ENCODE measurements at regions of chr16 and their contacts with region 1.

Region 1: DNA sequence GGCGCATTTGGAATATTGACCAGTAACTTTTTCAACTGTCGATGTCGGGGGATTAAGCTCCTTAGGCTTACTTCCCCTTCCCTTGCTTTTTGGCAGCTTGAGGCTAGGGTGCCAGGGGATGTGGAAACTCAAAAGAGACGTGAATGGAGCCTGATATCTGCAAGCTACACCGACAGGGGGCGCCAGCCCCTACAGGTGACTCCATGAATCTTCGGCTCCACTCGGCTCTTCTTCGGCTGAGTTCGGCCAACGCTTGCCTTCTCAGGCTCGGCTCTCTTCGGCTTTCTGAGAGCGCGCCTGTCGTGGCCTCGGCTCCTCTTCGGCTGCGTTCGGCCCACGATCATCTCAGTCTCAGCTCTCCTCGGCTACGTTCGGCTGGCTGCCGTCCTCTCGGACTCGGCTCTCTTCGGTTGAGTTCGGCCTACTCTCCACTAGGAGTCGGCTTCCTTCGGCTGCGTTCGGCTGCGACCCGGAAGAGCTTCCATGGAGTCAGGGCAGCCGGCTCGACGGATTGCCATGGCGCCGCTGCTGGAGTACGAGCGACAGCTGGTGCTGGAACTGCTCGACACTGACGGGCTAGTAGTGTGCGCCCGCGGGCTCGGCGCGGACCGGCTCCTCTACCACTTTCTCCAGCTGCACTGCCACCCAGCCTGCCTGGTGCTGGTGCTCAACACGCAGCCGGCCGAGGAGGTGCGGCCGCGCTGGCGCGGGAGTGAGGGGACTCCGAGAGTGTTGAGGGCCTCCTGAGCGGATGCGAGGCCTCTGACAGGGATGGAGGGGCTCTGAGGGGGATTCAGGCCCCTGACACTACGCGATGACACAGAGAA is at the start of gene ERCC4:
- DNase-seq: peak; percentile 98 to 99 (median 98)
- H3K4me3 ChIP-seq: peak within 1 kb of the TSS; percentile 63 to 99 (median 92)
- H3K27ac ChIP-seq: peak within 1 kb of the TSS in 56 of 59 donors; percentile 44 to 97 (median 85)
- H3K27me3 ChIP-seq: no peaks in the 10 kb centered on the region
- CTCF ChIP-seq: peak; percentile 75 to 97 (median 87)
- total RNA-seq, gene ERCC4: 9.7 to 26.2 (median 16.9) TPM

Region 2: GRCh38 chr16:14070877-14071575 is 151.1 kb after region 1 on chr16 and contains the start of gene MRTFB:
- intact Hi-C with region 1: loop called in 1 of 2 experiments (anchors 10 kb)
- DNase-seq: peak in 8 of 10 donors; percentile 46 to 84 (median 58)
- H3K4me3 ChIP-seq: peak within 1 kb of the TSS; percentile 61 to 96 (median 84)
- H3K27ac ChIP-seq: peak within 1 kb of the TSS in 58 of 59 donors; percentile 35 to 93 (median 83)
- H3K27me3 ChIP-seq: no peaks in the 10 kb centered on the region
- CTCF ChIP-seq: no peak
- total RNA-seq, gene MRTFB: 76.4 to 314 (median 223) TPM

Region 3: DNA sequence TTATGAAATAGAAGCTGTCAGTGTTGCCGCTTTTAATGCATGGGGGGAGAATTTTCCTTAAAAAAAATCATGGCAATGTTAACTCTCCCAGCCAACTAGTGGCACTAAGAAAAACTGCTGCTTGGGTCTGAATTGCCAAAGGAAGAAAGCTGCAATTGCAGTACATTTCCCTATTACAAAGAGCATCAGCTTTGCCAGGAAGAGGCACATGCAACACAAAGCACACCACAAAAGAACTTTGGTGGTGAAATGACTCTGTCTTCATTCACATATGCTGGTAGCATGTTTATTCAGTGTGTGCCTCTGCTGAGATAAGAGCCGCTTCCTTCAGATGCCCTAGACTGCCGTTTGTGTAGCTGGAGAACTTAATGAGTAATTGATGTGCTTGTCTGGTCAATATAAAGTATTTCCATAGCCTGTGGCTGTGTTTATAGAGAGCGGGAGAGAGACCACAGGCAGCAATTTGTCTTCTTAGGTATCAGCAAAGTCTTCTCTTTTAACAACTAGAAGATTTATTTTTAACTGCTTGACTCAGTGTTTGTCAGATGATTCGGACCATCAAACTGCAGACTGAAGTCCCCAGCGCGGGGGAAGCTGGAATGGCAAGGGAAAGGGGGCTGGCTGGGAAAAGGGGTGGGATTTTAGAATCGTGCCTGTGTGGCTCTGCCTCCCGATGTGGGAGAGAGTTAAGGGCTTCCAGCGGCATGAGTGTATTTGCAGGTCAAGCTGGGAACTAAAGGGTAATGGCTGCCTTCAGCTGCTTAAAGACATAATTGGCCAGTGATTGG is 266.3 kb after region 1 on chr16:
- intact Hi-C with region 1: loop called in 1 of 2 experiments (anchors 10 kb)
- DNase-seq: peak in 8 of 10 donors; percentile 38 to 78 (median 68)
- H3K4me3 ChIP-seq: peak overlapping the region; percentile 31 to 77 (median 61)
- H3K27ac ChIP-seq: peak overlapping the region in 58 of 59 donors; percentile 11 to 94 (median 84)
- H3K27me3 ChIP-seq: no peaks in the 10 kb centered on the region
- CTCF ChIP-seq: peak in 51 of 56 donors; percentile 16 to 64 (median 44)

Region 4: GRCh38 chr16:14249291-14250032 is 329.6 kb after region 1 on chr16:
- intact Hi-C with region 1: loop called (anchors 5 to 10 kb)
- DNase-seq: peak in 3 of 10 donors; percentile 17 to 61 (median 59)
- H3K4me3 ChIP-seq: no peak overlapping the region
- H3K27ac ChIP-seq: peak overlapping the region in 2 of 59 donors; percentile 22 to 34
- H3K27me3 ChIP-seq: no peaks in the 10 kb centered on the region
- CTCF ChIP-seq: peak; percentile 65 to 93 (median 84)

Region 5: GRCh38 chr16:14285513-14286385 is 365.9 kb after region 1 on chr16:
- intact Hi-C with region 1: loop called (anchors 2 to 5 kb)
- DNase-seq: peak; percentile 87 to 94 (median 93)
- H3K4me3 ChIP-seq: peak overlapping the region; percentile 58 to 95 (median 83)
- H3K27ac ChIP-seq: peak overlapping the region; percentile 73 to 94 (median 88)
- H3K27me3 ChIP-seq: no peaks in the 10 kb centered on the region
- CTCF ChIP-seq: peak in 18 of 56 donors; percentile 1 to 40 (median 16)

Region 6: DNA sequence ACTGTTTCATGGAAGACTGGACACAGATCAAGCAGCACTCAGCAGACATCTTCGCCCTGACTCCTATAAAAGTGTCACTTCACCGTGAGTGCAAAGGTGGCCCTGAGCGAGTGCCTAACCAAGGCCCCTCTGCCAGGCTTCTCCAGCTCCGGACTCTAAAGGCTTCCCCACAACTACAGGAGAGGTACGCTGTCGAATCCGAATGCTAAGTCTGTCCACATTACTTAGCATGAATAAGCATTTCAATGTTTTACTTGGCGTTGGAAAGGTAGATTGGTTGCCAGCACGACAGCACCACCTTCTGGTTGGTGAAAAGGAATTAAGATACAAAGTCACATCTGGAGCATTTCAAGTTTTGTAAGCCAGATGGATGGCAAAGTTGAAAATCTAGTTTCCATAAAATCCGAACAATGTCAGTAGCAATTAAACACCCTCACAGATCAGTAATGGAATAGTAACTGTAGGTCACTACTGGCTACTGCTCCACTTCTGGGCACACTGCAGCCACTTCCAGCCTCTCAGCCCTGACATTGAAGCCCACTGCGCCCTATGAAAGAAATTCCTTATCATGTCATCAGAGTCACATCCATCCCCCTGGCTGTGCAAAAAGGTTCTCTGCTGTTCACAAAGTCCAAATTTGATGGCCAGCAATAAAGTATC is 609.2 kb after region 1 on chr16:
- intact Hi-C with region 1: loop called (anchors 5 to 10 kb)
- DNase-seq: peak; percentile 30 to 77 (median 67)
- H3K4me3 ChIP-seq: peak overlapping the region in 47 of 59 donors; percentile 8 to 54 (median 39)
- H3K27ac ChIP-seq: peak overlapping the region in 5 of 59 donors; percentile 13 to 65 (median 40)
- H3K27me3 ChIP-seq: no peaks in the 10 kb centered on the region
- CTCF ChIP-seq: peak; percentile 78 to 95 (median 86)

Region 7: GRCh38 chr16:14534546-14534945 is 614.6 kb after region 1 on chr16:
- intact Hi-C with region 1: loop called (anchors 5 to 10 kb)
- DNase-seq: no peak
- H3K4me3 ChIP-seq: no peak overlapping the region
- H3K27ac ChIP-seq: no peak overlapping the region
- H3K27me3 ChIP-seq: no peaks in the 10 kb centered on the region
- CTCF ChIP-seq: no peak